Vagina (tissue), 2 donors: ENCODE measurements at regions of chr5 and their contacts with region 1.

Region 1: GRCh38 chr5:130549884-130550561 is 615.0 kb downstream of the HINT1 start:
- DNase-seq: no peak
- H3K4me3 ChIP-seq: no peak overlapping the region
- H3K27ac ChIP-seq: no peak overlapping the region
- H3K4me1 ChIP-seq: peaks cover 6% of the 10 kb centered on the region
- H3K27me3 ChIP-seq: no peaks in the 10 kb centered on the region
- CTCF ChIP-seq: no peak
- POLR2A ChIP-seq: no peak

Region 2: DNA sequence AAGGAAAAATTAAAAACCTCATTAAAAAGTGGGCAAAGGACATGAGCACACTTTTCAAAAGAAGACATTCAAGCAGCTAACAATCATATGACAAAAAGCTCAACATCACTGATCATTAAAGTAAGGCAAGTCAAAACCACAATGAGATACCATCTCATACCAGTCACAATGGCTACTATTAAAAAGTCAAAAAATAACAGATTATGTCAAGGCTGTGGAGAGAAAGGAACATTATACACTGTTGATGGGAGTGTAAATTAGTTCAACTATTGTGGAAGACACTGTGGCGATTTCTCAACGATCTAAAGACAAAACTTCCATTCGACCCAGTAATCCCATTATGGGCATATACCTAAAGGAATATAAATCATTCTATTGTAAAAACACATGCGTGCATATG is 579.3 kb after region 1 on chr5:
- intact Hi-C with region 1: loop called (anchors 5 kb)
- DNase-seq: no peak
- H3K4me3 ChIP-seq: no peak overlapping the region
- H3K27ac ChIP-seq: no peak overlapping the region
- H3K4me1 ChIP-seq: no peaks in the 10 kb centered on the region
- H3K27me3 ChIP-seq: no peaks in the 10 kb centered on the region
- CTCF ChIP-seq: no peak
- POLR2A ChIP-seq: no peak